Heart left ventricle (tissue), 16 donors: ENCODE measurements at regions of chr21 and their contacts with region 1.

Region 1: DNA sequence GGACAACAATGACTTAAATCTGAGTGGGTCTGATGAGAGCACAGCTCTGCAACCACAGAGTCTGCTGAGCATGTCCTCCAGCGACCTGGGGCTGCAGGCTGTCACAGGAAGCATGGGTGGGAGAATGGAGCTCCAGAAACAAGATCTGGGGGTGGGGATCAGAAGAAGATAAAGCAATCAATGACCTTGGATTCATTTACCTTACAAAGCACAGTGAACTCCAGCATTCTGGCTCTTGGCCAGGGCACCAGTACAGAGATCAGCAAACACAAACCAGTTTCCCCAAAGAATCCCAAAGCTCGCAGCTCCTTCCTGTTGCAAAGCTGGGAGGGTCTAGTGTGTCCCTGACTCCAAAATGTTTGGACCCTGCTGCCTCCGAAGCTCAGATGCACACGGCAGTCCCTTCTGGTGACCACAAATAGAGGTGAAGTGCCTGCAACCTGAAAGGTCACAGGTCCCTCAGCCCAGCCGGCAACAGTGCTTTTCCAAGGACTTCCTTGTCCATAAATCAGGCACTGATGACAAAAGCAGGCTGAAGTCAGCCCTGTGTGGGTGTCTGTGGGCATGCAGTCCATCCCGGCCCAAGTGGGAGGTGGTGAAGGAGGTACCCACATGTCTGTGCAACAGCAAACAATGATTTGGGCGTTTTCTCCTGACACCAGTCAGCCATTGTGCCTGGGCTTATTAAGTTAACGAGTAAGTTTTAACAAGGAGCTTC is 76.1 kb downstream of the SH3BGR start:
- DNase-seq: no peak
- ATAC-seq: no peak
- H3K4me3 ChIP-seq: no peak overlapping the region
- H3K27ac ChIP-seq: peak overlapping the region in 1 of 12 donors; percentile 29
- H3K4me1 ChIP-seq: peaks cover 0 to 43% (median 13%) of the 10 kb centered on the region in 12 donors
- H3K27me3 ChIP-seq: no peaks in the 10 kb centered on the region
- CTCF ChIP-seq: no peak
- POLR2A ChIP-seq: no peak

Region 2: DNA sequence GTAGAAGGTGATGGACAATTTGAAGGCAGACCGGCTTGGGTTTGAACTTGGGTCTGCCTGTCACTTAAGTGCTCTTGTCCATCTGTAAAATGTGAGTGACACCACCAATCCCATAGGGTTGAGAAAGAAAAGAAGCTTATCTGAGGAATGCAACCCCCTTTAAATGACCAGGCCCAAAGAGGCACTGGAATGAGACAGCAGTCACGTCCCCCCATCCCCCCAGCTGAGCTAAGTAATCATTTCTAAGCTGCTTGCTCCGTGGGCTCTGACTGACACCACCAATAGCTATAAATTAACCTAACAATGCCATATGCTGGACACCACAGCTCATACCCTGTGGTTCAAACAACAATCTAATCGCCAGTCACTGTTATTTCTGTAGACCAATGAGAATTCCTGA is 97.4 kb before region 1 on chr21:
- intact Hi-C with region 1: no loop called
- DNase-seq: no peak
- ATAC-seq: no peak
- H3K4me3 ChIP-seq: no peak overlapping the region
- H3K27ac ChIP-seq: no peak overlapping the region
- H3K4me1 ChIP-seq: no peaks in the 10 kb centered on the region
- H3K27me3 ChIP-seq: no peaks in the 10 kb centered on the region
- CTCF ChIP-seq: no peak
- POLR2A ChIP-seq: no peak

Region 3: DNA sequence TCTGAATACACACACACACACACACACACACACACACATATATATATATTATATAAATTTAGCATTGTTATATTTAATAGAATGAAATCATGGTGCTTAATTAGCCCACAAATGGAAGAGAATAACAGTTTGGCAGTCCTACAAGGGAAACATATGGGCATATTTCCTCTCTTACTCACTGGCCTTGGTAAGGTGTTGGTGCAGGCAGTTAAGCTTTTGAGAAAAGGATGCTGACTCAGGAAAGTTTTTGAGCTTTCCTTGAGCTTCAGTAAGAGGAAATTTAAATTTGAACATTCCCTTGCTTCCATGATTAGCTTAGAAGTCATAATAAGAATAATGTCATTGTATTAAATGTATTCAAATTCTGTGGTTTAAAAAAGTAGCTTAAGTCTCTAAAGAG is 48.0 kb after region 1 on chr21:
- intact Hi-C with region 1: loop called in 1 of 10 experiments (anchors 5 kb)
- DNase-seq: no peak
- ATAC-seq: no peak
- H3K4me3 ChIP-seq: no peak overlapping the region
- H3K27ac ChIP-seq: no peak overlapping the region
- H3K4me1 ChIP-seq: peaks cover 0 to 8% (median 0%) of the 10 kb centered on the region in 12 donors
- H3K27me3 ChIP-seq: peaks cover 0 to 4% (median 0%) of the 10 kb centered on the region in 9 donors
- CTCF ChIP-seq: no peak
- POLR2A ChIP-seq: no peak

Region 4: GRCh38 chr21:39633770-39634181 is 106.0 kb after region 1 on chr21:
- intact Hi-C with region 1: loop called in 2 of 10 experiments (anchors 5 to 10 kb)
- DNase-seq: no peak
- ATAC-seq: no peak
- H3K4me3 ChIP-seq: no peak overlapping the region
- H3K27ac ChIP-seq: no peak overlapping the region
- H3K4me1 ChIP-seq: no peaks in the 10 kb centered on the region
- H3K27me3 ChIP-seq: peaks cover 0 to 7% (median 0%) of the 10 kb centered on the region in 9 donors
- CTCF ChIP-seq: no peak
- POLR2A ChIP-seq: no peak